Activated T-helper 1 cell treated with anti-CD3 and anti-CD28 coated beads, Interleukin-12 subunit alpha, Interleukin-12 subunit beta, Interleukin-2, Interleukin-4 antibody, amounts not matched to agents 30 ng/mL and 10 ng/mL and 1 ng/mL, durations not matched to agents 14 hours and 24 hours and 36 hours (primary cell): ENCODE measurements at regions of chr1 and their contacts with region 1.

Region 1: DNA sequence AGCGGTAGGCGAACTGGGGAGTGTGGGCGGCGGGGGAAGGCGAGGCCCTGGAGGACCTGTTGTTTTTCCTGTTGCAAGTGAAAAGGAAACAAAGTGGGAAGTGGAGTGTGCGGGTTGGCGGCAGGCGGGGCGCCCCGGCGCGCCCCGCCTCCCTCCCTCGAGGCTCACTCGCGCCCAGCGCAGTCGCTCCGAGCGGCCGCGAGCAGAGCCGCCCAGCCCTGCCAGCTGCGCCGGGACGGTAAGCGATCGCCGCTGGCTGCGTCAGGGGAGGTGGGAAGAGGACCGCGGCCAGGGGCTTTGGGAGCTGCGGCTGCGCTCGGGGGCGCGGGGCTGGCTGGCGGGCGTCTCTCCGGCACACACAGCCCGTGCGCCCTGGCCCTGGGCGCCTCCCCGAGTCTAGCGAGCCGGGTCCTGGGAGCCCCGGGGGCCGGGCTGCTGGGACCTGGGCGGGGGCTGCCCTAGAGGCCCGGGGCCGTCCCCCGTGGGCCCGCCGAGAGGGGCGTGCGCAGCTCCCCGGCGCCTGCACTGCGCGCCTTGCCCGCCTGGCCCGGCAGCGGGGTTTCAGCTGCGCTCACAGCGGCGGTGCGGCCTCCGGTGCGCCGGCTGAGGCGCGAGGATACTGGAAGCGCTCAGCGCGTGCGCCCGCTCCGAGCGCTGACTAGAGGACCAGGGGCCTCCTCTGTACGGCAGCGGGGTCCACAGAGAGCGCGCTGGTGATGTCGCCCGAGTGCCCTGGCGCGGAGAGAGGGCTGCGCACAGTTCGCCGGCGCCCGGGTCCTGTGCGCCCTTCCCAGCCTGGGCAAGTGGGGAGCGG is at the start of gene PIK3CD:
- DNase-seq: peak; percentile 31
- H3K4me3 Mint-ChIP-seq: peak within 1 kb of the TSS; percentile 95
- H3K27ac Mint-ChIP-seq: peak within 1 kb of the TSS; percentile 97
- H3K4me1 Mint-ChIP-seq: peaks cover 45% of the 10 kb centered on the region
- H3K27me3 Mint-ChIP-seq: no peaks in the 10 kb centered on the region
- total RNA-seq, gene PIK3CD: 287 and 291 TPM in 2 replicates

Region 2: DNA sequence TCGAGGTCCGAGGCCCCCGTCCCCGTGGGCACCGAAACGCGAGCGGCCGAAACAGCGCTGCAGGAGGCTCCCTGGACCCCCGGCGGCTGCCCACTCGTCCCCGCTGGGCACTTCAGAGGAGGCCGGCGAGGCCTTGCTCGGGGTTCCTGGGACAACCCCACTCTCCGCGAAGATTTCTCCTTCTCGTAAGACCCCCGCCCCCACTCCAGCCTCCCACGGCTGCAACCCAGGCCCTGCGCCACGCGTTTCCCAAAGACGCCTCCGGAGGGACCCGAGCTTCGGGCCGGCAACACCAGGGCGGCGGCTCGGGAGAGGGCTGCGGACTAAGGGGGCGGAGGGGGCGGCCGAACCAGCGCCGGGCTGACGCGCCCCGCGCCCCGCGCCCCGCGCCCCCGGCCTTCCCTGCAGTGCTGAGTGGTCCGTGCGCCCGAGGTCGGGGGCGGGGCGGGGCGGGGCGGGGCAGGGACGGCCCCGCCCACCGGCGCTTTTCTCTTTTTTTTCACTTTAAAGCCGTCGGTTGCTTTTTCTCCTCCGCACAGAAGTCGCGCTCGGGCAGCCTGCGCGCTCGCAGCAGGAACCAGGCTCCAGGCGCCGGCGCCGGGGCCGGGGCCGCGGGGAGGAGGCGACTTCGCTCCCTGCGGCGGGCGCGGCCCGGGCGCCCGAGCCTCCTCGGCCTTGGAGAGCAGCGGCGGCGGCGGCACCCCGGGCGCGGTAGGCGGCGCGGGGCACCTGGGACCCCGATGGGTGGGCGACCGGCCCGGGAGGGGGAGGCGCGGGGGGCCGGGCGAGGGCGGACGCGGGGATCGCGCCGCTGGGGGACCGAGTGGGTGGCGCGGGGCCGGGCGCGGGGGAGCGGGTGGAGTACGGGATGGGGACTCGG is 359.2 kb before region 1 on chr1 and contains the start of gene SPSB1:
- intact Hi-C with region 1: loop called (anchors 10 kb)
- DNase-seq: peak; percentile 56
- H3K4me3 Mint-ChIP-seq: peak within 1 kb of the TSS; percentile 46
- H3K27ac Mint-ChIP-seq: no peak within 1 kb of the TSS
- H3K4me1 Mint-ChIP-seq: peaks cover 24% of the 10 kb centered on the region
- H3K27me3 Mint-ChIP-seq: no peaks in the 10 kb centered on the region
- total RNA-seq, gene SPSB1: 8.9 and 10.0 TPM in 2 replicates

Region 3: DNA sequence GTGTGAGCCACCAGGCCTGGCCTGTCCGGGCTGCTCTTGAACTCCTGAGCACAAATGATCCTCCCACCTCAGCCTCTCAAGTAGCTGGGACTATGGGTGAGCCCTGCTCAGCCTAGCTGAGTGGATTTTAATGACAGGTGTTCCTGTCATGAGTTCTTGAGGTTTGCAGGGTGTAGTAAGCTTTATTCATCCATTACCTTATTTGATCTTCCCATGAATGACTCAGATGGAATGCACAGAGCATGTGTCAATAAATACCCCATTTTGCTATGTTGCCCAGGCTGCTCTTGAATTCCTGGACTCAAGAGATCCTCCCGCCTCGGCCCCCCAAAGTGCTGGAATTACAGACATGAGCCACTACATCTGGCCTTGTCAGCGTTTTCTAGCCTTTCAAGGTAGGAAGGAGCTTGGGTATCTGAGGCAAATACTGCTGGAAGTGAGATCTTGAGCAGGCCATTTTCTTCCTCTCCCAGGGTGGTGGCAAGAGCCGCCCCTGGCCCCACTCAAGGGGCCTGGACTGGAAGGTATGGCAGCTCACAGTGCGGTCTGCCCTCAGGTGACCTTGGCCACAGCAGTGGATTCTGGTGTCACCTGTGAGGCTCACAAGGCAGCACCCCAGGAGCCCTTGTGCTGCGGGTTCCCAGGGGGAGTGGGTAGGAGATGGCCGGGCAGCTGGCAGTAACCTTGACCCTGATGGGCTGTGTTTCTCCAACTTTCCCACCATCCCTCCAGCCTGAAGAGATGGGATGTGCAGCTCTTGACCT is 19.8 kb after region 1 on chr1:
- intact Hi-C with region 1: loop called (anchors 1 kb)
- DNase-seq: no peak
- H3K4me3 Mint-ChIP-seq: no peak overlapping the region
- H3K27ac Mint-ChIP-seq: peak overlapping the region; percentile 36
- H3K4me1 Mint-ChIP-seq: peaks cover 34% of the 10 kb centered on the region
- H3K27me3 Mint-ChIP-seq: no peaks in the 10 kb centered on the region

Region 4: DNA sequence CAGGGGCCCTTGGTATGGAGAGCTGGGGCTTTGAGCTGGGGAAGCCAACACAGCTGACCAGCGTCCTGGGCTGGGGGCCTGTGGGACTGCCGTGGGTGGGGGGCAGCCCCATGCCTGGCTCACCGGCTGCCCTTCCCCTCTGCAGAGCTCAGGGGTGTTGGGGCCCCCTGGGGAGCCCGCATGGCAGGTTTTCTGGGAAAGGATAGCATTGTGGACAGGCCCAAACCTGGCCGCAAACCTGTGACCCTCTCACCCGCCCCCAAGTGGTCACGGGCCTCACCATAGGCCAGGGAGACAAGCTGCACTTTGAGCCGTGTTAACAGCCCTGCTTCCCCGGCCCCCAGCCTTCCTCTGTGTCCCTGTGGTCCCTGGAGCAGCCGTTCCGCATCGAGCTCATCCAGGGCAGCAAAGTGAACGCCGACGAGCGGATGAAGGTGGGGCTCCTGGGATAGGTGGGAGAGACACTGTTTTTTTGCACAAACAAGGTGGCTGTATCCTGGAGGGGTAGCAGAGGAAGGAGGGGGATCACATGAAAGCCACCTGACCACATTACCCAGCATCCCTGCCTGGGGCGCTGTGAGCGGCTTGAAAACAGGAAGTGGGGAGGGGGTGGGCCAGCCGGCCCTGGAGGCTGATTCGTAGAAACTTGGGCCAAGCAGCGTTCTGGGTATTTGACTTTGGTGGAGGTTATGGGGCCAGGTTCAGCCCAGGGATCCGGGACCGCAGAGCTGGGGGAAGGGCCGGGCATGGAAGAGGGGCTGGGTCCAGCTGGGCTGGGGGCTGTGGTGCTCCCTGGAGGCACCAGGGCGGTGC is 65.6 kb after region 1 on chr1:
- intact Hi-C with region 1: loop called (anchors 1 kb)
- DNase-seq: peak; percentile 86
- H3K4me3 Mint-ChIP-seq: peak overlapping the region; percentile 82
- H3K27ac Mint-ChIP-seq: peak overlapping the region; percentile 97
- H3K4me1 Mint-ChIP-seq: peaks cover 37% of the 10 kb centered on the region
- H3K27me3 Mint-ChIP-seq: no peaks in the 10 kb centered on the region

Region 5: GRCh38 chr1:9798236-9799130 is 146.7 kb after region 1 on chr1:
- intact Hi-C with region 1: loop called (anchors 1 kb)
- DNase-seq: no peak
- H3K4me3 Mint-ChIP-seq: no peak overlapping the region
- H3K27ac Mint-ChIP-seq: no peak overlapping the region
- H3K4me1 Mint-ChIP-seq: peaks cover 33% of the 10 kb centered on the region
- H3K27me3 Mint-ChIP-seq: no peaks in the 10 kb centered on the region